AG04450 (cell line): ENCODE measurements at regions of chr12 and their contacts with region 1.

Region 1: DNA sequence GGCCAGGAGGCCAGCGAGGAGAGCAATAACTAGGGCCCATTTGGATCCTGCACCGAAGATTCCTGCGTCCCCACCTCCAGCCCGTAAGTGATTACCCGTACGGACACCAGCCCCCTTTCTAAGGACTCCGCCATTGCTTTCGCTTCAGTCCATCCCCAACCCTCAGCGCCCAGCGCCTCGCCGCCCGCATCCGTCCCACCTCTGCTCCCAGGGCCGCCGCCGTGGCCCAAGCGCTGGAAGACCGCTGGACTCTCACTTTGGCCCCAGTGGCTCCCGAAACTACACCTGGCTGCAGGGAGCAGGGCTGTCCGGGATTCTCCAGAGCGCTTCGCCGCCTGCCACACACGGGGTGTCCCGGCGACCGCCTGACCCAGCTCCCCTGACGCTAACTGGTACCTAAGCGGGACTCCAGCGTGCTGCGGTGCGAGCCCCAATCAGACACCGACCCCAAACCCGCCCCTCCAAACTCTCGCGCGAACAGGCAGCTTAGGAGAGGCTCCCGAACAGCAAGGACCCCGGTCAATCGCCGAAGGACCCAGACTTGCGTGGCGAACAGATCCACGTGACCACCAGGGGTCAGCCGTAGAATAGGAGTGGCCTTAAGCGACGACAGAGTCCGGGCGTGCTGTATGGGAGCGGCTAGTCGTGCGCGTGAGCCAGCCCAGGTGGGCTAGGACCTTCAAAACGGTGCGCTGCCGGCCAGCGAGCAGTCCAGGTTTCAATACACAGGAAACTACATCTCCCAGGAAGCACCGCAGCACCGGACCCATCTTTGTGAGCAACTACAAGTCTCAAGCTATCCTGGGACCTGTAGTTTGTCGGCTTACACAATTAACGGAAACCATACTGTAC is at the start of gene CNPY2:
- DNase-seq: peak; percentile 88
- H3K4me3 ChIP-seq: peak within 1 kb of the TSS; percentile 96
- H3K27ac ChIP-seq: peak within 1 kb of the TSS; percentile 92
- H3K27me3 ChIP-seq: no peaks in the 10 kb centered on the region
- CTCF ChIP-seq: no peak
- polyA plus RNA-seq, gene CNPY2: 186 and 194 TPM in 2 replicates

Region 2: DNA sequence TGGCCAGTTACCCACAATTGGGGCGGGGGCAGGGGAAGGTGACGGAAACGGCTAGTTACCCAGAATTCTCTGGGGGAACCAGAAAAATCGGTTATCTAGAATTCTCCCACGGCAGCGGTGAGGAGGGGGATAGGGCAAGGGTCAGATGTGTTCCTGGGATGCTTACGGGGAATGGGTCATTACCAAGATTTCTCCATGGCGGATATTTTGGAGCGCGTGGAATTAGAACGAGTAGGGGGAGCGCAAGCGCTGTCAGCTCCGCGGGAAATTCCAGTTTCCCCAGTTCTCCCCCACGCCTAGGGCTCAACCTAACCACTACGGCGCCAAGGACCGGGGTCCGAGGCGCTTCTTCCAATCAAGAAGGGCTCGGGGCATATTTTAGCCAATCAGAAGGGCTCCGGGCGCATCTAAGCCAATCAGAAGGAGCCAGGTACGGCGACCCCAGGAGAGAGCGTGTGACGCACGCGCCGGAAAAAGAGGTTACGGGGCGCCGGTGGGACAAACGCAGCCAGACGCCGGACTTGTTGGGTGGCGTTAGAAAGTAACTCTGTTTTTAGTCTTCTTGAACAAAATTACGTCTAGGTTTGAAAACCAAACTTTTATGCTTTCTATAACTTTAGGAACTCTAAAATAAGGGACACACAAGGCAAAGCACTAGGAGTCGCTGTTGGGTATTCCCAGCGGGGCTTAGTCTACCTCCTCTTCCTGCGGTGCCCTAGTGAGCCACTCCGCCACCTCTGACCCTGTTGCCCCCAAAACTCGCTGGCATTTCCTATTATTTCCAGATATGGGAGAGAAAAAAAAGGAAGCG is 18.0 kb after region 1 on chr12 and contains the start of gene PAN2:
- CTCF ChIA-PET with region 1: interaction called, 3 read pairs
- POLR2A ChIA-PET with region 1: interaction called, 13 read pairs
- DNase-seq: peak; percentile 90
- H3K4me3 ChIP-seq: peak within 1 kb of the TSS; percentile 67
- H3K27ac ChIP-seq: peak within 1 kb of the TSS; percentile 91
- H3K27me3 ChIP-seq: no peaks in the 10 kb centered on the region
- CTCF ChIP-seq: peak; percentile 84
- polyA plus RNA-seq, gene PAN2: 18.5 and 22.2 TPM in 2 replicates